Ascending aorta (tissue), 2 donors: ENCODE measurements at regions of chr17 and their contacts with region 1.

Region 1: GRCh38 chr17:12667299-12667958 is 1.7 kb downstream of the MYOCD start:
- DNase-seq: peak in 1 of 2 donors; percentile 81
- H3K4me3 ChIP-seq: peak overlapping the region; percentile 80 to 84
- H3K27ac ChIP-seq: peak overlapping the region; percentile 93 to 98
- H3K4me1 ChIP-seq: peaks cover 0 to 15% of the 10 kb centered on the region in 2 donors
- H3K27me3 ChIP-seq: no peaks in the 10 kb centered on the region
- CTCF ChIP-seq: peak; percentile 53 to 74 (median 62)

Region 2: DNA sequence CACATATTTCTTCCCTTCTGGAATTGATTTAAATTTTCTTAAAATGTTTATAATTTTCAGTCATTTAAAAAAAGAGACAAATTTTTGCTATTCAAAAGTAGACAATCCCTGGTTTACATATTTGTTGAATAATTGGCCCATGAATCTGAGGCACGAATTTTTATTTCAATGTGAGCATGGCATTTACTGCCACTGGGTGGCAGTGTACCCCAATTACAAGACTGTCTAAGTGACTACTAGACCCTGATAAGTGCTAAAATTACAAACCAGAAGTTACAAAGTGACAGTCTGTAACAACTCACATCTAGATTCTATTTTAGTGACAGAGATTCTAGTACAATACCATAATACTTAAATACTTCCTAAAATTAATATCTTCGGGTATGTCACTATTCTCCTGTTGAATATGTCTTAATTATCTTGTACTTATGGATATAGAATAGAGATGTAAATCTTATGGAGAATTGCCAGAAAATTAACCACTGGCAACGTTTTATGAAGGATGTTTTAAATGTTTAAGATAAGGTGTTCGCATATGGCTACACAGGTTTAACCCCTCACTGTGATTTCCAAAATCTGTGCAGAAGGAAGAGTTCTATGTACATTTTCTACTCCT is 410.9 kb before region 1 on chr17:
- intact Hi-C with region 1: loop called (anchors 1 kb)
- DNase-seq: peak in 1 of 2 donors; percentile 70
- H3K4me3 ChIP-seq: peak overlapping the region in 1 of 2 donors; percentile 0
- H3K27ac ChIP-seq: no peak overlapping the region
- H3K4me1 ChIP-seq: peaks cover 0 to 10% of the 10 kb centered on the region in 2 donors
- H3K27me3 ChIP-seq: no peaks in the 10 kb centered on the region
- CTCF ChIP-seq: peak; percentile 62 to 87 (median 82)

Region 3: DNA sequence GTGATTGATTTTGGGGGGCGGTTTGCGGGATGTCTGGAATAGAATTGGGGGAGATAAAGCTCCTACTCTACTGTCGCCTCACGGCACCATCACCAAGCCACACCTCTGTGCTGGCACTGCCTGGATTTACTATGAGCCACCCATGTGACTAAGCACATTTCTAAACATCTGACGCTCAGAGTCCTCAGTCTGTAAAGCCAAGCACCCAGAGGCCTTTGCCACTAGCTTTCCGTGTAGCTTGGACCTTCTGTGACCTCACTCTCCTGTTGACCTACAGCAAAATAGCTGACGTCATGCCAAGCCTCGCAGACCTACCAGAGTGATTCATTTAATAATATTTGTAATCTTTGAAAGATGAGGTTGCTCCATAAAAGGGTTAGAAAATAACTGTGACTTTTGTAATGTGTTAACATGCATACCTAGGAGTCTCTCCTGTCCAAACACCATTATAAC is 40.2 kb before region 1 on chr17:
- intact Hi-C with region 1: loop called (anchors 5 kb)
- DNase-seq: peak; percentile 80 to 96
- H3K4me3 ChIP-seq: peak overlapping the region in 1 of 2 donors; percentile 32
- H3K27ac ChIP-seq: peak overlapping the region; percentile 95 to 96
- H3K4me1 ChIP-seq: peaks cover 15 to 45% of the 10 kb centered on the region in 2 donors
- H3K27me3 ChIP-seq: no peaks in the 10 kb centered on the region
- CTCF ChIP-seq: no peak

Region 4: DNA sequence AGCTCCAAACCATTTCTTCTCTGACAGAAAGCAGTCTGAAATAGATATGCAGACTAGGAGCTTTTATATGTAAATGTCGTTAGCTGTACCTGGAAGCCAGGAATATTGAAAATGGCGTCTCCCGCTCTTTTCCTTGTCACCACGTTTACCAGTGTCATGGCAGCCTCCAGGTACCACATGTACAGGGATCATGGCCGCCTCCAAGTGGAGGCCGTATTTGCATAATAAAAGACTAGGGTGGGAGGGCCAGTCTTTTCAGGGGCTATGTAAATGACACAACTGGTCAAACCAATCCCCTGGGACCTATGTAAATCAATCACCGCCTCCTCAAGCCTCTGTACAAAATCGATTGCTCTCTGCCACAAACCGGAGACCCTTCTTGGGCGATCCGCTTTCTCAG is 52.5 kb after region 1 on chr17:
- intact Hi-C with region 1: no loop called
- DNase-seq: no peak
- H3K4me3 ChIP-seq: no peak overlapping the region
- H3K27ac ChIP-seq: no peak overlapping the region
- H3K4me1 ChIP-seq: peaks cover 0 to 2% of the 10 kb centered on the region in 2 donors
- H3K27me3 ChIP-seq: no peaks in the 10 kb centered on the region
- CTCF ChIP-seq: no peak

Region 5: GRCh38 chr17:12730931-12731521 is 63.6 kb after region 1 on chr17:
- intact Hi-C with region 1: loop called (anchors 2 kb)
- DNase-seq: peak; percentile 77 to 96
- H3K4me3 ChIP-seq: no peak overlapping the region
- H3K27ac ChIP-seq: peak overlapping the region; percentile 81 to 91
- H3K4me1 ChIP-seq: peaks cover 0 to 35% of the 10 kb centered on the region in 2 donors
- H3K27me3 ChIP-seq: no peaks in the 10 kb centered on the region
- CTCF ChIP-seq: no peak

Region 6: GRCh38 chr17:13017659-13018459 is 350.4 kb after region 1 on chr17 and contains the start of gene ELAC2:
- intact Hi-C with region 1: loop called (anchors 10 kb)
- DNase-seq: peak; percentile 93 to 99
- H3K4me3 ChIP-seq: peak within 1 kb of the TSS; percentile 98 to 99
- H3K27ac ChIP-seq: peak within 1 kb of the TSS; percentile 78 to 83
- H3K4me1 ChIP-seq: peaks cover 0 to 14% of the 10 kb centered on the region in 2 donors
- H3K27me3 ChIP-seq: no peaks in the 10 kb centered on the region
- CTCF ChIP-seq: peak in 1 of 3 experiments; percentile 16
- total RNA-seq, gene ELAC2: 190 TPM